ENCODE measurements at regions of chr4 and their contacts with region 1.

Region 1: GRCh38 chr4:169485791-169486742 is 126.3 kb downstream of the NEK1 start:
- DNase-seq: no peak
- H3K4me3 ChIP-seq: no peak overlapping the region
- H3K27ac ChIP-seq: no peak overlapping the region
- H3K4me1 ChIP-seq: no peaks in the 10 kb centered on the region
- H3K27me3 ChIP-seq: no peaks in the 10 kb centered on the region
- CTCF ChIP-seq: peak; percentile 47 to 50 (median 48)
- EP300 ChIP-seq: no peak
- POLR2A ChIP-seq: no peak

Region 2: GRCh38 chr4:168923526-168924194 is 562.4 kb before region 1 on chr4:
- intact Hi-C with region 1: loop called (anchors 10 kb)
- DNase-seq: no peak
- H3K4me3 ChIP-seq: no peak overlapping the region
- H3K27ac ChIP-seq: peak overlapping the region; percentile 13 to 56 (median 34)
- H3K4me1 ChIP-seq: peaks cover 7 to 29% (median 23%) of the 10 kb centered on the region in 4 donors
- H3K27me3 ChIP-seq: no peaks in the 10 kb centered on the region
- CTCF ChIP-seq: peak; percentile 48 to 65 (median 58)
- EP300 ChIP-seq: no peak
- POLR2A ChIP-seq: no peak

Region 3: DNA sequence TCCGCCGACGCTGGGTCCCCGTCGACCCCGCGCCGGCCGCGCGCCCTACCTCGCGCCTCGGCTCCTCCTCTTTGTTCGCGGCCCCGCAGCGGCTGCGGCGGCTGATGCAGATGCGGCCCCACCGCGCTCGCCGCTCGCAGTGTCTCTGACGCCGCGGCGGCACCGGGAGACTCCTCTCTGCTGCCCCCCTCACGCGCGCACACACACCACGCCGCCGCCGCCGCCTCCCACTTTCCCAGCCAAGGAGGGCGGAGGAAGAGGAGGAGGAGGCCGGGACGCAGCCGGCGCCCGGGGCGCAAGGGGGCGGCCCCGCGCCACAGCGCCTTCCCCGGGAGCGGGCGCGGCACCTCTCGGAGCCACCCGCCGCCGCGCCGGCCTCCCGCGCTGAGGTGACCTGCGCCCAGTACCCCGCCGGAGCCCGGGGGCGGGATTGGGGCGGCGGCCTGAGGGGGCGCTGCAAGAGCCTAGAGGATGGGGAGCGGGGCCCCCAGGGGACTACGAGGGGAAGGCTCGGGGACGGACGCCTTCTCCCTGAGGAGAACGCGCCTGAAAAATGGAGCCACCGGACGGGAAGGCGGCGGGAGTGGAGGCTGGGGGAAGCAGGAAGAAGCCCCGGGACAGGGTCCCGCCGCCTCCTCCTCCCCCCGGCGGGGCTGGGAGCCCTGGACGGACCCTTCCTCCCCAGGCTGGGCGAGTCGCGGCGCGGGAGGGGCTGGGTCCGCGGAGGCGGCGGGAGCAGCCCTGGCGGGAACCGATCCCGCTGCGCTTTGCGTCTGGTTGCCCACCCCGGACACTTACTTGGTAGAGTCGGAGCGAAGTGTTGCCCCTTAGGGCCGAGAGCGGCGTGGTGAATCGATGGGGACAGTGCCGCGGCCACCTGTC is 215.0 kb before region 1 on chr4 and contains the start of gene SH3RF1:
- intact Hi-C with region 1: loop called (anchors 5 kb)
- DNase-seq: peak; percentile 94
- H3K4me3 ChIP-seq: peak within 1 kb of the TSS; percentile 82 to 96 (median 92)
- H3K27ac ChIP-seq: peak within 1 kb of the TSS; percentile 88 to 93 (median 90)
- H3K4me1 ChIP-seq: peaks cover 29 to 38% (median 35%) of the 10 kb centered on the region in 4 donors
- H3K27me3 ChIP-seq: no peaks in the 10 kb centered on the region
- CTCF ChIP-seq: peak in 2 of 3 experiments; percentile 34 to 38
- EP300 ChIP-seq: no peak
- POLR2A ChIP-seq: peak; percentile 69
- total RNA-seq, gene SH3RF1: 10.0 to 11.8 (median 10.9) TPM

Measured in esophagus muscularis mucosa (tissue), 4 donors.